Left ventricle myocardium inferior (tissue), 1 donor: ENCODE measurements at regions of chr12 and their contacts with region 1.

Region 1: DNA sequence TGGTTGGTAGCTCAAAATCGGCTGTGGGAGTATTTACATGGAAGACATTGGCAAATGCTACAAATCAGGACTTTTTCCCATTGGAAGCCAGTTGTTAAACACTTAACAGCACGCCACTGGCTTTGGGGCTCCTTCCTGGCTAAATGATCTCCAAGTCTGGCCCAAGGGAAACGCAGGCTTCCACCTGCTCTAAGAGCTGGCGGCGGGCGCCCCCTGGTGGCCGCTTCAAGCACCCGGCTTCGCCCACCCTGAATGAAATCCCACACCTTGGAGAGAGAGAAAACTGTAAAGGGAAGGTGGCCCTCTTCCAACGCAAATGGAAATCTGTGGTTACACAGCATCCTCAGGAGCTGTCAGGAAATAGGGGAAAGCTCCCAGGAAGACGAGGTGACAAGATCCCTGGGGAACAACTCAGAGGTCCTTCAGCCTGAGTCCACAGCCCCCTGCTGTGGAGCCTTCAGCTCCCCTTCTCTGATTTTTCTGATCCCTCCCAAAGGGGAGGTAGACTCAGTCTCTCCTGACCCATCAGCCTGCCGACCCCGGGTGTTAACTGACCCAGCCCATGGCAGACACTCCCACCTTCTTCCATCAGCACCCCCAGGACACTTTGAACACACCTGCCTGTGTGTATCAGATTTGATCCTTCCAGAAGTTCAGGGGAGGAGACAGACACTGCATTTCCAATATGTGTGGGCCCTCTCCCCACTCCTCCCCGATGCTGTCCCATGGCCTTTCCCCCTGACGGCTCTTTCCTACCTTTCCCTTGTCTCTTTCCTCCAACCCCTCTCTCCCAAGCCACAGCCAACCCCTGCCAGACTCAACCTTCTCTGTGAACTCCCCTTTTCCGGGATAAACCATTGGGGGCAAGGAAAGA is 15.4 kb downstream of the SELPLG start:
- DNase-seq: peak; percentile 79
- H3K4me3 ChIP-seq: no peak overlapping the region
- H3K27ac ChIP-seq: no peak overlapping the region
- H3K4me1 ChIP-seq: peaks cover 20% of the 10 kb centered on the region
- H3K27me3 ChIP-seq: no peaks in the 10 kb centered on the region
- CTCF ChIP-seq: peak; percentile 97

Region 2: DNA sequence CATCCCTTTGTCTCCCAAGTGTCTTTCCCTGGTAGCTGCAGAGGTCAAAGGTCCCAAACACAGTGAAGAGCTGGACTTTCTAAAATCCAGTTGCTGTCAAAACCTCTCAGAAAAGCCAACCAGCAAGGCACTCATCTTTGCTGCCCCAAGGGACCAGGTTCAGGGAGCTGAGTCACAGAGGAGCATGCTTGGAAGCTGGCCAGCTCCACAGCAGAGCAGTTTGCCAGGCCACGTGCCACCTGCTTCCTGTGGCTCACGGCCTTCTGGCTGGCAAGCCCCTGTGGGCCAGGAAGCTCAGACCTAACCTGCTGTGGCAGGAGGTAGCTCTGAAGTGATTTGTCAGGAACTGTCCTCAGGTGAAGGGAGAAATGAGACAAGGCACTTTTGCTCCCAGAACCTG is 52.3 kb before region 1 on chr12:
- intact Hi-C with region 1: loop called (anchors 5 kb)
- DNase-seq: peak; percentile 81
- H3K4me3 ChIP-seq: no peak overlapping the region
- H3K27ac ChIP-seq: peak overlapping the region; percentile 66
- H3K4me1 ChIP-seq: peaks cover 73% of the 10 kb centered on the region
- H3K27me3 ChIP-seq: no peaks in the 10 kb centered on the region
- CTCF ChIP-seq: no peak